K562 (cell line): ENCODE measurements at regions of chrX and their contacts with region 1.

Region 1: GRCh38 chrX:53631156-53631555 is 55.4 kb downstream of the HUWE1 start:
- DNase-seq: no peak
- ATAC-seq: no peak
- H3K4me3 ChIP-seq: no peak overlapping the region
- H3K27ac ChIP-seq: no peak overlapping the region
- H3K4me1 ChIP-seq: no peaks in the 10 kb centered on the region
- H3K27me3 ChIP-seq: no peaks in the 10 kb centered on the region
- CTCF ChIP-seq: no peak
- EP300 ChIP-seq: no peak
- POLR2A ChIP-seq: no peak
- RAD21 ChIP-seq: no peak

Region 2: GRCh38 chrX:53445977-53446376 is 185.2 kb before region 1 on chrX:
- CTCF ChIA-PET with region 1: no interaction called
- POLR2A ChIA-PET with region 1: no interaction called
- in situ Hi-C with region 1: no loop called
- intact Hi-C with region 1: no loop called
- DNase-seq: peak; percentile 47 to 68 (median 48)
- ATAC-seq: peak; percentile 96
- H3K4me3 ChIP-seq: no peak overlapping the region
- H3K27ac ChIP-seq: no peak overlapping the region
- H3K4me1 ChIP-seq: no peaks in the 10 kb centered on the region
- H3K27me3 ChIP-seq: no peaks in the 10 kb centered on the region; a peak in 3 of 5 replicates
- CTCF ChIP-seq: peak; percentile 76 to 77 (median 77)
- EP300 ChIP-seq: no peak
- POLR2A ChIP-seq: no peak
- RAD21 ChIP-seq: peak; percentile 13 to 76; a peak in 2 of 4 replicates

Region 3: GRCh38 chrX:53594354-53594753 is 36.8 kb before region 1 on chrX:
- CTCF ChIA-PET with region 1: no interaction called
- POLR2A ChIA-PET with region 1: no interaction called
- in situ Hi-C with region 1: no loop called
- intact Hi-C with region 1: loop called (anchors 5 kb)
- DNase-seq: no peak
- ATAC-seq: no peak
- H3K4me3 ChIP-seq: no peak overlapping the region
- H3K27ac ChIP-seq: no peak overlapping the region
- H3K4me1 ChIP-seq: no peaks in the 10 kb centered on the region
- H3K27me3 ChIP-seq: no peaks in the 10 kb centered on the region
- CTCF ChIP-seq: no peak
- EP300 ChIP-seq: no peak
- POLR2A ChIP-seq: no peak
- RAD21 ChIP-seq: no peak